Activated CD4-positive, alpha-beta T cell treated with anti-CD3 and anti-CD28 coated beads for 36 hours (primary cell): ENCODE measurements at regions of chr15 and their contacts with region 1.

Region 1: GRCh38 chr15:59917504-59918157 is 86.5 kb upstream of the FOXB1 start:
- DNase-seq: peak; percentile 87
- ATAC-seq: peak; percentile 61
- H3K4me3 Mint-ChIP-seq: no peak overlapping the region
- H3K27ac Mint-ChIP-seq: peak overlapping the region; percentile 58
- H3K4me1 Mint-ChIP-seq: peaks cover 28% of the 10 kb centered on the region
- H3K27me3 Mint-ChIP-seq: peaks cover 11% of the 10 kb centered on the region

Region 2: GRCh38 chr15:59736184-59736583 is 181.4 kb before region 1 on chr15:
- CTCF ChIA-PET with region 1: no interaction called
- POLR2A ChIA-PET with region 1: no interaction called
- intact Hi-C with region 1: no loop called
- DNase-seq: no peak
- ATAC-seq: no peak
- H3K4me3 Mint-ChIP-seq: no peak overlapping the region
- H3K27ac Mint-ChIP-seq: no peak overlapping the region
- H3K4me1 Mint-ChIP-seq: no peaks in the 10 kb centered on the region
- H3K27me3 Mint-ChIP-seq: no peaks in the 10 kb centered on the region

Region 3: DNA sequence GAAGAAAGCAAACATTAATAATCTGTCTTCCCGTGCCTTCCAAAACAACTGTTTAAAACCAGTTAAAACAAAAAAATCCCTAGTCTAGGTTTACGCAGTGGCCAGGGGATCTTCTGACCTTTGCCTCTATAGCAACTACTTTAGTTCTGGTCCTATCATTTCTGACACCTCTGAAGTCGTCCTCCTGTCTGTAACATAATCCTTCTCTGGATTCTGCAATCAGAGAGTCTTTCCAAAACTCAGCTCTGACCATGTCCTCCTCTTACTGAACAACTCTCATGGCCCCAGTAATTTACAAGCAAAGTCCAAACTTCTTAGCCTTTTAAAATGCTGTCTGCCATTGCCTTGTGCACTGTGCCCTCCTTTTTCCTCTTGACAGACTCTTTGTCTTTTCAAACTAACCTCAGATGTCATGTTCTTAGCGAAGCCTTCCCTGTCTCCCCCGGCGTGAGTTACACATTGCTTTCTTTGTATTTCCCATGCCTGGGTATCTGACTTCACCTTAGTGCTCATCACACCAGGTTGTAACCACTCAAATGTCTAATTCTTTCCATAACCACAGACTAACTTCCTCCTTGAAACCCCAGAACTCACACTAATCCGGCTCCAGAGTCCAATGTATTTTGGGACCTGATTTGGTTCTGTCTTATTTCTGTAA is 123.3 kb before region 1 on chr15:
- CTCF ChIA-PET with region 1: interaction called, 4 read pairs
- POLR2A ChIA-PET with region 1: no interaction called
- intact Hi-C with region 1: loop called in 1 of 2 experiments (anchors 1 kb)
- DNase-seq: peak; percentile 31
- ATAC-seq: peak; percentile 62
- H3K4me3 Mint-ChIP-seq: no peak overlapping the region
- H3K27ac Mint-ChIP-seq: no peak overlapping the region
- H3K4me1 Mint-ChIP-seq: peaks cover 48% of the 10 kb centered on the region
- H3K27me3 Mint-ChIP-seq: no peaks in the 10 kb centered on the region

Region 4: GRCh38 chr15:59997070-59997701 is 79.6 kb after region 1 on chr15:
- CTCF ChIA-PET with region 1: interaction called, 3 read pairs
- POLR2A ChIA-PET with region 1: no interaction called
- intact Hi-C with region 1: loop called (anchors 2 to 5 kb)
- DNase-seq: peak; percentile 84
- ATAC-seq: peak; percentile 88
- H3K4me3 Mint-ChIP-seq: peak overlapping the region; percentile 59
- H3K27ac Mint-ChIP-seq: no peak overlapping the region
- H3K4me1 Mint-ChIP-seq: peaks cover 48% of the 10 kb centered on the region
- H3K27me3 Mint-ChIP-seq: peaks cover 86% of the 10 kb centered on the region

Region 5: DNA sequence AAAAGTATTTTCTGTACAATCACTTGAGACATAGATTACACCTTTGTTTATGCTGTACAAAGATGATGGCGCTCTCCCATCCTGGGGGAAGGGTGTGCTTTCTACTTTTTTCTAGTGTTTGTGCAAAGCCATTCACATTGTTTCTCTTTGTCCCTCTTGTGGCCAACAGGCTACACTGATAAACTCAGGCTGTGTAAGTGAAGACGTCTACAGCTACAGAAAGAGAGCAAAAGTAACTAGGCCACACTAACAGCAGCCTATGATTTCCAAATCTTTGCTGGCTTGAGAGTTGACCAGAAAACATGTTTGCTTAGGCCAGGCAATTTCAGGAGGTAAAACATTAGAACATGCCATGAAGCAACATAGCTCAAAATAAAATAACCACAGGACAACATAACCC is 161.6 kb after region 1 on chr15:
- CTCF ChIA-PET with region 1: interaction called, 3 read pairs
- POLR2A ChIA-PET with region 1: no interaction called
- intact Hi-C with region 1: loop called in 1 of 2 experiments (anchors 2 kb)
- DNase-seq: no peak
- ATAC-seq: no peak
- H3K4me3 Mint-ChIP-seq: no peak overlapping the region
- H3K27ac Mint-ChIP-seq: no peak overlapping the region
- H3K4me1 Mint-ChIP-seq: peaks cover 40% of the 10 kb centered on the region
- H3K27me3 Mint-ChIP-seq: peaks cover 8% of the 10 kb centered on the region

Region 6: GRCh38 chr15:60255390-60255789 is 337.8 kb after region 1 on chr15:
- CTCF ChIA-PET with region 1: no interaction called
- POLR2A ChIA-PET with region 1: no interaction called
- intact Hi-C with region 1: loop called (anchors 1 kb)
- DNase-seq: peak; percentile 53
- ATAC-seq: peak; percentile 99
- H3K4me3 Mint-ChIP-seq: no peak overlapping the region
- H3K27ac Mint-ChIP-seq: no peak overlapping the region
- H3K4me1 Mint-ChIP-seq: peaks cover 9% of the 10 kb centered on the region
- H3K27me3 Mint-ChIP-seq: peaks cover 37% of the 10 kb centered on the region